Lower leg skin (tissue), 4 donors: ENCODE measurements at regions of chr2 and their contacts with region 1.

Region 1: DNA sequence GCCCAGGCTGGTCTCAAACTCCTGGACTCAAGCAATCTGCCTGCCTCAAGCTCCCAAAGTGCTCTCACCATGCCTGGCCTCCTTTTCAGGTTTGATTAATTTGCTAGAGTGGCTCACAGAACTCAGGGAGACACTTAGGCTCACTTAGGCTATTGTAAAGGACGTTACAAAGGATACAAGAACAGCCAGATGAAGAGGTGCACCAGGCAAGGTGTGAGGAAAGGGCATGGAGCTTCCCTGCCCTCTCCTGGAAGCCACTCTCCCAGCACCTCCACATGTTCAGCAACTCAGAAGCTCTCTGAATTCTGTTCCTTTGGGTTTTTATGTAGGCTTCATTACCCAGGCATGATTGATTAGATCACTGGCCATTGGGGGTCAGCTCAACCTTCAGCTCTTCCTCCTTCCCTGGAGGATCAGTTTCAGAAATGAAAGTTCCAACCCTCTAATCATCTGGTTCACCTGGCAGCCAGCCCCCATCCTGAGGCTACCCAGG is 78.7 kb upstream of the RGPD5 start:
- DNase-seq: peak in 1 of 2 donors; percentile 79
- H3K4me3 ChIP-seq: no peak overlapping the region
- CTCF ChIP-seq: peak in 1 of 3 donors; percentile 37
- POLR2A ChIP-seq: no peak

Region 2: DNA sequence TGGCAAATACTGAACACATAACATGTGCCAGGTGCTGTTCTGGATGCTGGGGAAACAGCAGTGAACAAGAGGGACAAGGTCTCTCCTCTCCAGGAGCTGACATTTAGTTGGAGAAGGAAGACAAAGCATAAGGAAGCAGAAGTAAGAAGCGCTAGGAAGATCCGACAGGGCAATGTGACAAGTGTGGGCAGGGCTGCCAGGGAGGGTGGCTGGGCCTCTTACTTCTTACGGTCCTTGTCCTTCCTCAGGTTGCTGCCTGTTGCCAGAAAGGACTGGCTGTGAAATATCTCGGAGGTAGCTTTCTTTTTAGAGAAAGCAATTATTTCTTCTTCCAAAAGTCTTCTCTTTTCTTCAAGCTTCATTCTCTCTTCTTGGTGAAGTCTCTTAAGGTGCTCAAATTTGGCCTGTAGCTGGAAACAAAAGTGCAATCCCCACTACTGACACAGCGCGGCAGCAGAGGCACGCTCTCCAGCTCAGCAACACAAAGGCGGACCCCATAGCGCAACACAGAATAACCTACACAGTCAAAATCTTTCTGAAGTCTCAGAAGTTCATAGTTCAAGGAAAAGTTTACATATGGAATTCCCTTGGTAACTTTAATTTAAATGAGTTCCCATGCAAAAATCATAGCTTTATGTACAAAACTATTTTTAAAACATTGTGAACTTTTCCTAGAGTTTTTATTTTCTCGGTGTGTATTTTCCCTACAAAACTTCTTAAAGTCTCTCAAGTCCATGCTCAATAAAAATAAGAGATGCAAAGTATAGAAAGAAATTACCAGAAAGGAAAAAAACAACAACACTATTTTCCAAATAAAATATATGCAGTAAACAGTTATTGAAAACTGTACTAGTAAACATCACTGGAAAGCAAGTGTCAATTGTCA is 169.3 kb before region 1 on chr2:
- intact Hi-C with region 1: loop called (anchors 5 kb)
- DNase-seq: peak; percentile 52 to 93
- H3K4me3 ChIP-seq: no peak overlapping the region
- CTCF ChIP-seq: peak in 1 of 3 donors; percentile 90
- POLR2A ChIP-seq: no peak